Sigmoid colon (tissue), 7 donors: ENCODE measurements at regions of chr1 and their contacts with region 1.

Region 1: DNA sequence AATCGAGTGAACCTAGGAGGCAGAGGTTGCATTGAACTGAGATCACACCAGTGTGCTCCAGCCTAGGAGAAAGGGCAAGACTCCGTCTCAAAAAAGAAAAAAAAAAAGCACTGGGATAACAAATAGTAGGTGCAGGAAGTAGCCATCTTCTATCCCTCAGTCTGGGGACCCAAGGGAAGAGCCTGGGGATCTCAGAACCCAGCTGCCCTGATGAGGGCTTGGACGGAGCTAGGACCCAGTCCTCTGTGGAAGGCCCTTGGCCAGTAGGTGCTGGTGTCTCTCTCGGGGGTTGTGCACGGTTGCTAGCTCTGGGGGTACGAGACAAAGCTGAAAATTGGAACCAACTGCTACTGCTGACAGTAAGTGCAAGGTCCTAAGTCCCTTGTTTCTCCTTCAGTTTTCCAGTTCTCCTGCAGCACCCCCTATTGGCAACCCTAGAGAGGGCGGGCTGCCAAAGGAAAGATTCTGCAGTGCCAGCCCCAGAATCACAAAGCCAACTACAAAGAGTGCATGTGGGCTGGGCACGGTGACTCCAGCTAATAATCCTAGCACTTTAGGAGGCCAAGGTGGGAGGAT is 57.6 kb upstream of the KIF1B start:
- DNase-seq: no peak
- H3K4me3 ChIP-seq: no peak overlapping the region
- H3K27ac ChIP-seq: no peak overlapping the region
- H3K4me1 ChIP-seq: peaks cover 0 to 15% (median 5%) of the 10 kb centered on the region in 4 donors
- H3K27me3 ChIP-seq: no peaks in the 10 kb centered on the region
- CTCF ChIP-seq: peak in 3 of 4 experiments; percentile 47 to 51 (median 50)
- EP300 ChIP-seq: no peak
- POLR2A ChIP-seq: no peak

Region 2: GRCh38 chr1:9874959-9875635 is 277.7 kb before region 1 on chr1:
- intact Hi-C with region 1: loop called (anchors 5 kb)
- DNase-seq: peak; percentile 83
- H3K4me3 ChIP-seq: peak overlapping the region in 3 of 4 donors; percentile 6 to 39 (median 33)
- H3K27ac ChIP-seq: peak overlapping the region; percentile 19 to 64 (median 56)
- H3K4me1 ChIP-seq: peaks cover 0 to 17% (median 9%) of the 10 kb centered on the region in 4 donors
- H3K27me3 ChIP-seq: no peaks in the 10 kb centered on the region
- CTCF ChIP-seq: peak; percentile 78 to 95 (median 92)
- EP300 ChIP-seq: no peak
- POLR2A ChIP-seq: no peak

Region 3: DNA sequence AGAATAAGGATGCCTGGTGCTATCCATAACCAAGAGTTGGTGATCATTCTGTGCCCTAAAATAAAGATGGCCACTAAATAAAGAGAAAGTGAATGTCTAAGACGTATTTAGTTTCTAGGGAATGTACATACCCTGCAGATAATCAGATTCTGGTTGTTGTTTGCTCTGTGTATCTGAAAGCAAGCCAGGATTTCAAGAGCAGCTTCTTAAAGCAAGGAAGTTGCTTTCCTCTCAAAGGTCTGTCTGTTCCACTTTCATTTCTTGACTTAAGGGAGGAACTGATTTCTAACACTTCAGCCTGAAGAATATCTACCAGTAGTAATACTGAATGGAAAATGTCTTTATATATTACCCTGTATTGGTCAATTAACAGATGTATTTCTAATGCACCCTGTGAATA is 146.4 kb after region 1 on chr1:
- intact Hi-C with region 1: no loop called
- DNase-seq: no peak
- H3K4me3 ChIP-seq: no peak overlapping the region
- H3K27ac ChIP-seq: peak overlapping the region in 1 of 4 donors; percentile 9
- H3K4me1 ChIP-seq: peaks cover 0 to 7% (median 0%) of the 10 kb centered on the region in 4 donors
- H3K27me3 ChIP-seq: no peaks in the 10 kb centered on the region
- CTCF ChIP-seq: no peak
- EP300 ChIP-seq: no peak
- POLR2A ChIP-seq: no peak

Region 4: DNA sequence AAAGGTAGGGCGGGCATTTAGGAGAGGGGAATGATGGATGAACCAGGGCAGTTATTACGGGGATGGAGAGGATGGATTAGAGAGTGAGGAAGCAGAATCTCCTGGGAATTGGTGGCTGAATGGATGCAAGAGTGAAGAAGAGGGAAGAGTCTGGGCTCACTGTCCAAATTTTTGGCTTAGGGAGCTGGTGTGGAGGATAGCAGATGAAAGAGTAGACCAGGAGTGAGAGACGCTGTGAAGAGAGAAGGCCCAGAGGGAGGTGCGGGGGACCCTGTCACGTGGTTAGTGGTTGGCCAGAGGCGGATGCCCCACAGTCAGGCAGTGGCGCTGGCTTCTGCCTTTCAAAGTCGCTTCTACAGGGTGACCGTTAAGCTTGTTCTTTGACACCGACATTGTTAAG is 400.3 kb after region 1 on chr1:
- intact Hi-C with region 1: no loop called
- DNase-seq: no peak
- H3K4me3 ChIP-seq: no peak overlapping the region
- H3K27ac ChIP-seq: no peak overlapping the region
- H3K4me1 ChIP-seq: no peaks in the 10 kb centered on the region
- H3K27me3 ChIP-seq: no peaks in the 10 kb centered on the region
- CTCF ChIP-seq: no peak
- EP300 ChIP-seq: no peak
- POLR2A ChIP-seq: no peak

Region 5: GRCh38 chr1:10651389-10651766 is 498.6 kb after region 1 on chr1:
- intact Hi-C with region 1: no loop called
- DNase-seq: no peak
- H3K4me3 ChIP-seq: no peak overlapping the region
- H3K27ac ChIP-seq: peak overlapping the region; percentile 6 to 98 (median 94)
- H3K4me1 ChIP-seq: peaks cover 0 to 99% (median 88%) of the 10 kb centered on the region in 4 donors
- H3K27me3 ChIP-seq: no peaks in the 10 kb centered on the region
- CTCF ChIP-seq: no peak
- EP300 ChIP-seq: no peak
- POLR2A ChIP-seq: no peak